RWPE1 (cell line): ENCODE measurements at regions of chr7 and their contacts with region 1.

Region 1: GRCh38 chr7:100705753-100706671 is at the start of gene POP7:
- DNase-seq: peak; percentile 96
- H3K27ac ChIP-seq: peak within 1 kb of the TSS; percentile 85
- CTCF ChIP-seq: no peak

Region 2: GRCh38 chr7:100694098-100694745 is 11.8 kb before region 1 on chr7 and contains the start of gene GIGYF1:
- CTCF ChIA-PET with region 1: interaction called, 15 read pairs
- POLR2A ChIA-PET with region 1: interaction called, 7 read pairs
- DNase-seq: peak; percentile 84
- H3K27ac ChIP-seq: peak within 1 kb of the TSS; percentile 85
- CTCF ChIP-seq: no peak